ENCODE measurements at regions of chr6 and their contacts with region 1.

Region 1: GRCh38 chr6:157107915-157108651 is 215.2 kb downstream of the TMEM242 start:
- DNase-seq: peak; percentile 27
- H3K4me3 Mint-ChIP-seq: no peak overlapping the region
- H3K27ac Mint-ChIP-seq: no peak overlapping the region
- H3K4me1 Mint-ChIP-seq: peaks cover 45% of the 10 kb centered on the region
- H3K27me3 Mint-ChIP-seq: no peaks in the 10 kb centered on the region

Region 2: DNA sequence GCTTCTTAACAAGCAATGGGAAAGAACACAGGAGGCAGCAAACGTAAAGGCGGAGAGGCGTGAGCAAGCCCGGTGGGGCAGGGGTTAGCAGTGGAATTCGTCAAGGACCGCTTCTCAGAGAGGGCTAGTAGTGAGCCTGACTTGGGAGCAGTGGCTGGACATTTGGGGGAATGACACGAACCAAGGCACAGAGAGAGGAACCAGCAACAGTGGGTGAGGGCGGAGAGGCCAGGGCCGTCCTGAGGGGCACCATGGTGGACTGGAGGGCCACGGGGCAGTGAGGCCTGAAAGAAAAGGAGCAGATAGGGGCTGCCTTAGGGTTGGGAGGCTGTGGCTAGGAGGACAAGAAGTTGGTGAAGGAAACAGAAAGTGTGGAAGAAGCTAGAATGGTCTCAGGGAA is 343.0 kb before region 1 on chr6:
- CTCF ChIA-PET with region 1: no interaction called
- POLR2A ChIA-PET with region 1: no interaction called
- intact Hi-C with region 1: no loop called
- DNase-seq: no peak
- H3K4me3 Mint-ChIP-seq: no peak overlapping the region
- H3K27ac Mint-ChIP-seq: no peak overlapping the region
- H3K4me1 Mint-ChIP-seq: peaks cover 8% of the 10 kb centered on the region
- H3K27me3 Mint-ChIP-seq: peaks cover 2% of the 10 kb centered on the region

Region 3: DNA sequence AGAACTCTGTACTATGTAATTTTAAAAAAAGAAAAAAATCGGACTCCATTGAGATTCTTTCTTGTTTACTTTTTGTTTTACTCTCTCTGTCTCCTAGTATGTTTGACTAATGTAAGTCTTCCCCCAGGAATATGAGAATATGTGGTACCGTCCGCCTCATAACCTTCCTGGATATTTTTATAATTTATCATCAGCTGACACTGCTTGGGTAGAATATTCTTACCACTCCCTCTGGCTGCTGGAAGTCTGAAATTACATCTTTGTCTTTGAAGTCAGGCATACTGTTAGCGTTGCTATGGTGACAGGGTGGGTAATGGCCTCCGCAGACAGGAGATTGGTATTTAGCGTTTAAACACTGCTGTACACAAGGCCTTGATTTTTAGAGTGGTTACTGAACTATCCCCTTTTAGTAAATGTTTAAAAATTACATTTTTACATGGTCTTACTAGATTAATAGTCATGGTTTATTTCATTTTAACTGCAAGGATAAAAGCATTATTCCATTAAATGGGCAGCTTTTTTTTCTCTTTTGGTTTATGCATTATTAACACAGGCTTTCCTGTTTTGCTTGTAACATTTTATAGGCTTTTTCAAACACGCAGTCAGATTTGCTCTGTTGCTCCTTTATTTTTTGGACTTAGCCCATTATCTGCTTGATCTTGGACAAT is 154.5 kb before region 1 on chr6:
- CTCF ChIA-PET with region 1: no interaction called
- POLR2A ChIA-PET with region 1: no interaction called
- intact Hi-C with region 1: loop called (anchors 2 kb)
- DNase-seq: peak; percentile 41
- H3K4me3 Mint-ChIP-seq: no peak overlapping the region
- H3K27ac Mint-ChIP-seq: no peak overlapping the region
- H3K4me1 Mint-ChIP-seq: peaks cover 62% of the 10 kb centered on the region
- H3K27me3 Mint-ChIP-seq: no peaks in the 10 kb centered on the region

Region 4: DNA sequence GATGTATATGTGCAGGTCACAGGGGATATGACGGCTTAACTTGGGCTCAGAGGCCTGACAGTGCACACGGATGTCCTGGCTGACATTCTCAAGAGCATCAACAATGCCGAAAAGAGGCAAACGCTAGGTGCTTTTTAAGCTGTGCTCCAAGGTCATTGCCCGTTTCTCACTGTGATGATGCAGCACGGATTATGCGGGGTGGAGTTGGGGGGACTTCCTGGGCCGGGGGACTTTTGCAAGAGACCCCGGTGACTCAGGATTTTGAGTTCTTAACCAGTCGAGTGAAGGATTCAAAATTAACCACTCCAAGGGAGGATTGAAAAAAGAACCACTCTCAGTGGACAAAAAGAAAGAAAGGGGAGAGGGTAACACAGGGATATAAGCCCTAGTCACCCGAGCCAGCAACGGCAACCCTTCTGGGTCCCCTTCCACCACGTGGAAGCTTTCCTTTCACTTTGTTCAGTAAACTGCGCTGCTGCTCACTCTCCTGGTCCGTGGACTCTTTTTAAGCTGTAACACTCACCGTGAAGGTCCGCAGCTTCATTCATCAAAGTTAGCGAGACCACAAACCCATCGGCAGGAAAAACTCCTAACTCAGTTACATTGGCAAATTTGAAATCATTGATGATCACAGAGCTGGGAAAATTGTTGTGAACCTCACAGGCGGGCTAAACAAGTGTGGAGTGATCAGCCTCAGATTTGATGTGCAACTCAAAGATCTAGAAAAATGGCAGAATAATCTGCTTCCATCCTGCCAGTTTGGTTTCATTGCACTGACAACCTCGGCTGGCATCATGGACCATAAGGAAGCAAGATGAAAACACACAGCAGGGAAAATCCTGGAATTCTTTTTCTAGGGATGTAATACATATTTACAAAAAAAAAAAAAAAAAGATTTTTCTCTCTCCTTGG is 131.6 kb before region 1 on chr6:
- CTCF ChIA-PET with region 1: no interaction called
- POLR2A ChIA-PET with region 1: no interaction called
- intact Hi-C with region 1: loop called (anchors 5 kb)
- DNase-seq: peak; percentile 48
- H3K4me3 Mint-ChIP-seq: peak overlapping the region; percentile 73
- H3K27ac Mint-ChIP-seq: peak overlapping the region; percentile 77
- H3K4me1 Mint-ChIP-seq: peaks cover 74% of the 10 kb centered on the region
- H3K27me3 Mint-ChIP-seq: no peaks in the 10 kb centered on the region

Region 5: DNA sequence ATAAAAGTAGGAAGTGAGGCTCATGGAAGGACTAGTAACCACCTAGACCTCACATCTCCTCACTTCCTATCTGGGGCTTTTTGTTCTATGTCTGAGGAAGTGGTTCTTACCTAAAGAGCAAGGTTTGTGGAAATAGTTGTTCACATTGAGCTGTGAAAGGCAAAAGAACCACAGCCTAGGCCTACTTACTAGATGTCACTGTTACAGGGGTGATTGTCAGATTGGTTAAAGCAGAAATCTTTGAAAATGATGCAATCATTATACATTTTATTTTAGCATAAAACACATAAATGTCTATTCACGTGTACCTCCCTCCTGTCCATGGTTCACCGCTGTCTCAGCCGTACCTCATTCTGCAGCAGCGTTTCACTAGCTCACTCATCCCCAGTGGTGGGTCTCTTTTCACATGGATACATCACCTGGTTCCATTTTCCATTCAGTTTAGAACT is 53.5 kb before region 1 on chr6:
- CTCF ChIA-PET with region 1: interaction called, 5 read pairs
- POLR2A ChIA-PET with region 1: interaction called, 7 read pairs
- intact Hi-C with region 1: loop called (anchors 1 kb)
- DNase-seq: peak; percentile 59
- H3K4me3 Mint-ChIP-seq: no peak overlapping the region
- H3K27ac Mint-ChIP-seq: peak overlapping the region; percentile 91
- H3K4me1 Mint-ChIP-seq: peaks cover 39% of the 10 kb centered on the region
- H3K27me3 Mint-ChIP-seq: no peaks in the 10 kb centered on the region

Region 6: GRCh38 chr6:157068691-157069324 is 39.3 kb before region 1 on chr6:
- CTCF ChIA-PET with region 1: interaction called, 7 read pairs
- POLR2A ChIA-PET with region 1: interaction called, 4 read pairs
- intact Hi-C with region 1: loop called (anchors 1 kb)
- DNase-seq: no peak
- H3K4me3 Mint-ChIP-seq: peak overlapping the region; percentile 18
- H3K27ac Mint-ChIP-seq: peak overlapping the region; percentile 49
- H3K4me1 Mint-ChIP-seq: peaks cover 47% of the 10 kb centered on the region
- H3K27me3 Mint-ChIP-seq: no peaks in the 10 kb centered on the region

Region 7: DNA sequence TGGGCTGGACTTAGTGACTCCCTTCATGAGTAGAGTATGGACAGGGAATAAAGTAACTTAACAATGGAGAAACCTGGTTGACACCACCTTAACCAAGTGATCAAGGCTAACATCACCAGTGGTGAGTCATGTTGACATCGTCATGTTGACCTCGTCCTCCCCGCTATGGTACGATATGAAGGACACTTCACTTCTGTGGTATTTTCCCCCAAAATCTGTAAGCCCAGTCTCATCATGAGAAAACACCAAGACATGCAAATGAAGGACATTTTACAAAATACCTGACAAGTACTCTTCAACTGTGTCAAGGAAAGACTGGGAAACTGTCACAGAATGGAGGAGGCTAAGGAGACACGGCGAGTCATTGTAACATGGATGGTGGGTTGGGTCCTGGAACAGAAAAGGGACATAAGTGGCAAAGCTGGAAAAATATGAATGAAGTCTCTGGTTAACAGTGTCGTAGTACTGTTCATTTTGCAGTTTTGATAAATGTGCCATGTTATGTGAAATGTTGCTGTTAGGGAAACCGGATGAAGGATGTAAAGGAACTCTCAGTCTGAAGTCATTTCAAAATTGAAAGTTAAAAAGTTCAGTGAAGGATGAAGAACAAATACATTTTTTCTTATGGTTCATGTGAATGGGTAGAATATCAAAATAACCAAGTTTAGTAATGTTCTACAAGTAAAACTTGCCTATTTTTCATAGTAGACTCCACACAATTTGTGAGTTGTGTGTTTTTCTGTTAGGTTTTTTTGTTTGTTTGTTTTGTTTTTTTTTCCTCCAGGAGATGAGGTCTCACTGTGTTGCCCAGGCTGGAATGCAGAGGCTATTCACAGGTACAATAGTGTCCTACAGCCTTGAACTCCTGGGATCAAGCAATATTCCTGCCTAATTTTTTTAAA is 32.3 kb before region 1 on chr6:
- CTCF ChIA-PET with region 1: interaction called, 3 read pairs
- POLR2A ChIA-PET with region 1: interaction called, 3 read pairs
- intact Hi-C with region 1: loop called (anchors 1 kb)
- DNase-seq: peak; percentile 55
- H3K4me3 Mint-ChIP-seq: peak overlapping the region; percentile 71
- H3K27ac Mint-ChIP-seq: peak overlapping the region; percentile 91
- H3K4me1 Mint-ChIP-seq: peaks cover 41% of the 10 kb centered on the region
- H3K27me3 Mint-ChIP-seq: no peaks in the 10 kb centered on the region

Region 8: DNA sequence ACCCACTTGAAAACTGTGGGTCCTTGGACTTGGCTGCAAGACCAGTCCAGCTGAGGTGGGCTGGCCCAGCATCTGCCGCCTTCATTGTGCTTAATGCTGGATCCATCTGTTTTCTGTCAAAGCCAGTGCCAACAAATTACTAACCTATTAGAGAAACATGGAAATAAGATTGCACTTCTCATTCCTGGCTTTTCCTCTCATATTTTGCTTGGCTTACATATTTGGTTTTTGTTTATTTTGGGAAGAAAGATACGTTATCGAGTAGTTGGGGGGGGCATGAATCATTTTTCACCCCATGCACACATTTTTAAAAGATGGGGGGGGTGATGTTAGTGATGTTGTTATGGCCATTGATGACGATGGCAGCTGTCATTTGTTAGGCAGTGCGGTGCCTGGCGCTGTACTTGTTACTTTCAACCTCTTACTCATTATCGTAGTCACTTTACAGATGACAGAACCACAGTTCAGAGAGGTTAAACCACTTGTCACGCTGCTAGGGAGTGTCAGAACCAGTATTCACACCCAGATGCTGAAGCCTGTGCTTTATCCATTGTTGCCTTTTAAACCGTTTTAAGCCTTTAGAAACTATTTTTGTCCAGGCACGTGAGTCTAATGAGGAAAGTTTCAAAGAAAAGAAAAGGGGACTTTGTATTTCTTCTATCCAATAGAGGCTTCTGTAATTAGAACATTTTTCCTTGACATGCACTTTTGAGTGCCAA is 35.2 kb after region 1 on chr6:
- CTCF ChIA-PET with region 1: no interaction called
- POLR2A ChIA-PET with region 1: no interaction called
- intact Hi-C with region 1: loop called (anchors 1 kb)
- DNase-seq: peak; percentile 65
- H3K4me3 Mint-ChIP-seq: no peak overlapping the region
- H3K27ac Mint-ChIP-seq: no peak overlapping the region
- H3K4me1 Mint-ChIP-seq: peaks cover 18% of the 10 kb centered on the region
- H3K27me3 Mint-ChIP-seq: no peaks in the 10 kb centered on the region

Measured in activated CD4-positive, alpha-beta memory T cell treated with anti-CD3 and anti-CD28 coated beads for 36 hours (primary cell).